ENCODE measurements at regions of chr14 and their contacts with region 1.

Region 1: GRCh38 chr14:20613094-20614037 is 22.2 kb upstream of the RNASE12 start:
- DNase-seq: peak; percentile 65 to 93 (median 80)
- ATAC-seq: peak; percentile 79 to 84 (median 82)
- H3K4me3 ChIP-seq: peak overlapping the region; percentile 57 to 75
- H3K4me3 Mint-ChIP-seq: no peak overlapping the region
- H3K27ac ChIP-seq: peak overlapping the region; percentile 36
- H3K27ac Mint-ChIP-seq: no peak overlapping the region
- H3K4me1 ChIP-seq: peaks cover 19 to 29% of the 10 kb centered on the region in 2 experiments
- H3K4me1 Mint-ChIP-seq: peaks cover 5 to 8% (median 5%) of the 10 kb centered on the region in 3 donors
- H3K27me3 ChIP-seq: no peaks in the 10 kb centered on the region
- H3K27me3 Mint-ChIP-seq: no peaks in the 10 kb centered on the region

Region 2: DNA sequence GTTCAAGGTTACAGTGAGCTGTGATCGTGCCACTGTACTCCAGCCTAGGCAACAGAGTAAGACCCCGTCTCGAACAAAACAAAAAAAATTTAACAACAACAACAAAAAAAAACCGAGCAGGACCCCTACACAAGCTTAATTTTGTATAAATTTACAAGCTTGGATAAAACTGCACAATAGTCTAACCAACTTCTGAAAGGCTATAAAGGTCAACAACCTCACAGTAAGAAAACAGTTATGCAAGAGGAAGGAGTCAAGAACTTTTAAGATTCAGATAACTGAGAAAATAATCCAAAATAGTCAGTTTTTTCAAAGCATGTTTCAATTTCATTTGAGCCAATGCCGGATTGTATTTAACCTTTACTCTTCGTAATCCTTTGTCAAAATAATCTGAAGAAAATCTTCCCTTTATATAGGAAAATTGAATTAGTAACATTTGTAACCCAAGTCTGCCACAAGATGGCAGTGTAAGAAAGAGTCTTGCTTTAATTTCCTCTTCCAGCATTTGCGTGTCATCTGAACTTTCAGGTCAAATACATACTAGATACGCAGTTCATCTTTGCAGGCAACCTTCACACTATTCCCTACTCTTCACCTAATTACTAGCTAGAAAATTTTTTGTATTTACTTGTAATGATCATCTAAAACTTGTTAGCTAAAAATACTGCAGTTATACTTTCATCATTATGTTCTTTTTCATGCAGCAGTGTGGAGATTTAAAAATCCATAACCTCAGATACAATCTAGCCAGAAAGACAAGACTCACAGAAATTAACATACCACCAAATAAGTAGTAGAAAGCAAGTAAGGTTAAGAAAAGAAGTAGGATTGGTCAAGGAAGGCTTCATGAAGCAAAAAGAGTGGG is 286.1 kb before region 1 on chr14:
- CTCF ChIA-PET with region 1: interaction called, 43 to 69 read pairs
- POLR2A ChIA-PET with region 1: no interaction called
- DNase-seq: peak in 8 of 35 experiments; percentile 9 to 84 (median 31)
- ATAC-seq: peak; percentile 46 to 72 (median 60)
- H3K4me3 ChIP-seq: no peak overlapping the region
- H3K4me3 Mint-ChIP-seq: peak overlapping the region in 1 of 3 donors; percentile 13
- H3K27ac ChIP-seq: no peak overlapping the region
- H3K27ac Mint-ChIP-seq: peak overlapping the region; percentile 70 to 79
- H3K4me1 ChIP-seq: peaks cover 0 to under 1% of the 10 kb centered on the region in 2 experiments
- H3K4me1 Mint-ChIP-seq: peaks cover 19 to 29% (median 24%) of the 10 kb centered on the region in 3 donors
- H3K27me3 ChIP-seq: no peaks in the 10 kb centered on the region
- H3K27me3 Mint-ChIP-seq: no peaks in the 10 kb centered on the region

Region 3: GRCh38 chr14:20632682-20633428 is 19.5 kb after region 1 on chr14:
- CTCF ChIA-PET with region 1: interaction called, 3 to 21 read pairs
- POLR2A ChIA-PET with region 1: interaction called in 1 of 2 experiments, 6 read pairs
- DNase-seq: peak in 25 of 35 experiments; percentile 34 to 77 (median 53)
- ATAC-seq: peak; percentile 36 to 57 (median 48)
- H3K4me3 ChIP-seq: peak overlapping the region; percentile 45 to 70
- H3K4me3 Mint-ChIP-seq: peak overlapping the region; percentile 75 to 79 (median 79)
- H3K27ac ChIP-seq: peak overlapping the region; percentile 28
- H3K27ac Mint-ChIP-seq: peak overlapping the region; percentile 65 to 75
- H3K4me1 ChIP-seq: peaks cover 12 to 38% of the 10 kb centered on the region in 2 experiments
- H3K4me1 Mint-ChIP-seq: peaks cover 40 to 54% (median 48%) of the 10 kb centered on the region in 3 donors
- H3K27me3 ChIP-seq: peaks cover 16 to 26% of the 10 kb centered on the region in 2 experiments
- H3K27me3 Mint-ChIP-seq: peaks cover 11 to 49% of the 10 kb centered on the region in 2 donors

Region 4: GRCh38 chr14:20682435-20683124 is 69.2 kb after region 1 on chr14:
- CTCF ChIA-PET with region 1: interaction called in 1 of 2 experiments, 34 read pairs
- POLR2A ChIA-PET with region 1: interaction called, 3 to 7 read pairs
- DNase-seq: peak; percentile 67 to 91 (median 76)
- ATAC-seq: peak; percentile 68 to 73 (median 72)
- H3K4me3 ChIP-seq: peak overlapping the region; percentile 68 to 98
- H3K4me3 Mint-ChIP-seq: no peak overlapping the region
- H3K27ac ChIP-seq: peak overlapping the region; percentile 91
- H3K27ac Mint-ChIP-seq: no peak overlapping the region
- H3K4me1 ChIP-seq: peaks cover 17 to 46% of the 10 kb centered on the region in 2 experiments
- H3K4me1 Mint-ChIP-seq: peaks cover 5 to 28% (median 7%) of the 10 kb centered on the region in 3 donors
- H3K27me3 ChIP-seq: no peaks in the 10 kb centered on the region
- H3K27me3 Mint-ChIP-seq: no peaks in the 10 kb centered on the region

Region 5: DNA sequence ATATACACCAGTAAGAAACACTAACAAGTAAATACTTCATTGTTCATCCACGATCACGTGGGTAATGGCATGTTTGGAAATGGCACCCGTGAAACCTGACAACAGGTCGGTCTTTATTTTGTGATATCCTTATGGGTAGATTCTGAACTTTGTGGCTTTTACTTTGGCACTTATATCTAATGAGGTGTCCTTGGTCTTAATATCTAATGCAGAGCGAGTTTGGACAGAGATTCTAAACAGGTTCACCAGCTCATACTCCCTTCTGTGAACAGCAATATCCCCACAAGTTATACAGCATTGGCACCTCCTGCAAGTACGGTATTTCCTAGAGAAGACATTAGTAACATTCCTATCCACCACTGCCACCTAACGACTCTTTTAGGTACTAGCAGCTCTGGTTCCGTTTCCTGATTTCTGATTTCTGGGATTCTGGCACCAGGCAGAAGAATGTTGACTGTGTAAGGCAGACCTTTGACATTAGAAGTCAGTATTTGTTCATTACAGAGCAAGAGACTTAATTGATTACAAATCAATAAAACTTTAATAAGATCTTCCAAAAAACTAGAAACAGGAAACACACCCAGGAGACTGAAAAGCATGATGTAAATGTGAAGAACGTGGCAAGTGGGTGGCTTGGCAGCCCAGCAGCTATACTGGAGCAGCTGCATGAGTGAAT is 77.6 kb after region 1 on chr14:
- CTCF ChIA-PET with region 1: interaction called, 5 to 11 read pairs
- POLR2A ChIA-PET with region 1: no interaction called
- DNase-seq: peak in 24 of 35 experiments; percentile 5 to 85 (median 22)
- ATAC-seq: peak; percentile 84 to 93 (median 88)
- H3K4me3 ChIP-seq: no peak overlapping the region
- H3K4me3 Mint-ChIP-seq: no peak overlapping the region
- H3K27ac ChIP-seq: no peak overlapping the region
- H3K27ac Mint-ChIP-seq: no peak overlapping the region
- H3K4me1 ChIP-seq: no peaks in the 10 kb centered on the region
- H3K4me1 Mint-ChIP-seq: peaks cover 4 to 6% (median 4%) of the 10 kb centered on the region in 3 donors
- H3K27me3 ChIP-seq: peaks cover 0 to 7% of the 10 kb centered on the region in 2 experiments
- H3K27me3 Mint-ChIP-seq: peaks cover 0 to 2% of the 10 kb centered on the region in 2 donors

Measured in T-cell (primary cell).